A673 (cell line): ENCODE measurements at regions of chr4 and their contacts with region 1.

Region 1: DNA sequence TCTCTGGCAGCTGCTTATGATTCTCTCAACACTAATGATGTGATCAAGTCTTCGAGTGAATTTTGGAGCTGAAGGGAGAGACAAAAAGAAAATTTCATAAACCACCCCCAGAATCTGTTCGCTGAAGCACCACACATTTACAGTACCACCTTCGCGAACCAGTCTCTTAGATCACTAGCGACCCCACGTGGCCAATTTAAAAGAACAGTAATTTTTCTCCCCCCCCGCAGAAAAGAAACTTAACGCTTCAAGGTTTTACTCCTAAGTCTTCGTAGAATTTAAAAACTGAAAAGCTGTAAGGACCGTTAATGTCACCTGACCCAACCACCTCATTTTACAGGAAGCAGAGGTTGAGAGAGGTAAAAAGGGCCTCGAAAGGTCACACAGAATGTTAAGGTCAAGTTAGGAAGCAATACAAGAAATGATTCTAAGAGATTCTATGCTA is 187.5 kb downstream of the QDPR start:
- DNase-seq: peak; percentile 82
- H3K4me3 ChIP-seq: no peak overlapping the region
- H3K27ac ChIP-seq: peak overlapping the region; percentile 53
- H3K4me1 ChIP-seq: peaks cover 21% of the 10 kb centered on the region
- H3K27me3 ChIP-seq: no peaks in the 10 kb centered on the region
- CTCF ChIP-seq: peak; percentile 83

Region 2: GRCh38 chr4:16056681-16057385 is 1267.6 kb before region 1 on chr4:
- CTCF ChIA-PET with region 1: no interaction called
- POLR2A ChIA-PET with region 1: no interaction called
- intact Hi-C with region 1: no loop called
- DNase-seq: peak; percentile 55
- H3K4me3 ChIP-seq: no peak overlapping the region
- H3K27ac ChIP-seq: no peak overlapping the region
- H3K4me1 ChIP-seq: peaks cover 13% of the 10 kb centered on the region
- H3K27me3 ChIP-seq: no peaks in the 10 kb centered on the region
- CTCF ChIP-seq: no peak

Region 3: DNA sequence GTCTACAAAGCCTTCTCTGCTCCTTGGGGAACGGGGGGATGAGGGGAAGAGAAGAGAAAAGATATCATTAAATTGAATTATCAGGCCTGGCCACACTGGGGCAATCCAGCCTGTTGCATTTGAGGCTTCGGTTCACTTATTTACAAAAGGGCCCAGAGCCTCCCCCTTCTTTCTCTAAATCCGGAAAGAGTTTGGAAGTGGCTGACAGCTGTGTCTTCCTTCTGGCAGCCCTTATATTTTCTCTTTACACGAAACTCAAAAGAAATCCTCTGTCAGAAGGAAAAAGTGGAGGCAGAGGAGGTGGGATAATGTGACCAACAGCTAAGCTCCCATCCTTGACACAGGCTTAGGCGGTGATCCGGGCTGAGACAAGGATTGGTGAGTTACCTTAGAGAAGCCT is 939.8 kb before region 1 on chr4:
- CTCF ChIA-PET with region 1: no interaction called
- POLR2A ChIA-PET with region 1: no interaction called
- intact Hi-C with region 1: loop called (anchors 5 kb)
- DNase-seq: peak; percentile 84
- H3K4me3 ChIP-seq: no peak overlapping the region
- H3K27ac ChIP-seq: peak overlapping the region; percentile 92
- H3K4me1 ChIP-seq: peaks cover 54% of the 10 kb centered on the region
- H3K27me3 ChIP-seq: no peaks in the 10 kb centered on the region
- CTCF ChIP-seq: no peak

Region 4: GRCh38 chr4:16516796-16517439 is 807.5 kb before region 1 on chr4:
- CTCF ChIA-PET with region 1: no interaction called
- POLR2A ChIA-PET with region 1: no interaction called
- intact Hi-C with region 1: loop called (anchors 2 kb)
- DNase-seq: peak; percentile 91
- H3K4me3 ChIP-seq: no peak overlapping the region
- H3K27ac ChIP-seq: no peak overlapping the region
- H3K4me1 ChIP-seq: peaks cover 36% of the 10 kb centered on the region
- H3K27me3 ChIP-seq: no peaks in the 10 kb centered on the region
- CTCF ChIP-seq: peak; percentile 80

Region 5: DNA sequence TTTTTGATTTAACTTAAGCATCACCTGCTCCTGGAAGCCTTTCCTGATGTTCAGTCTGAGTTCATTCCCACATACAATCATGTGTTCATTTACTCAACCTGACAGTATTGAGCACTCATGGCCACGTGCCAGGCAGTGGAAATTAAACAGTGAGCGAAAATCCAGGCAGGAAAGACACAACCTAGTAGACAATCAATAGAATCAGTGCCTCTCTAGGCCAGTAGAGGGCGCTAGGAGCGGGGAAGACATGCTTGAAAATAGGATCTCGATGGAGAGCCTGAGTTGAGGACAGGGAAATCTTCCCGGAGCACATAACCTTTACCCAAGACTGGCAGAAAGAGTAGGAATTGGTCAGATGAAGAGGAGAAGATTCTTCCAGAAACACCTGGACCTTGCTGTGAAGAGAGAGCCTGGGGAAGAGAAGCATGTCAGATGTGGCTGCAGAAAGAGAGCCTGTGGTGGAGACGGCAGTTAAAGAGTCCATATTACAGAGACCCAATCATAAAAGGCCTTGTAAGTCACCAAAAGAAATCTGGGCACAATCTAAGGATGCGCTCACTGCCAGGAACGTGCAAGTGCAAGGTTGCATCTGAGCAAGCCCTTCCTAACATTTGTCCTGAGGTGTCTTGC is 529.5 kb before region 1 on chr4:
- CTCF ChIA-PET with region 1: interaction called, 3 read pairs
- POLR2A ChIA-PET with region 1: no interaction called
- intact Hi-C with region 1: loop called (anchors 1 kb)
- DNase-seq: peak; percentile 89
- H3K4me3 ChIP-seq: no peak overlapping the region
- H3K27ac ChIP-seq: no peak overlapping the region
- H3K4me1 ChIP-seq: peaks cover 6% of the 10 kb centered on the region
- H3K27me3 ChIP-seq: no peaks in the 10 kb centered on the region
- CTCF ChIP-seq: peak; percentile 98

Region 6: GRCh38 chr4:17092736-17093437 is 231.5 kb before region 1 on chr4:
- CTCF ChIA-PET with region 1: no interaction called
- POLR2A ChIA-PET with region 1: no interaction called
- intact Hi-C with region 1: loop called (anchors 1 kb)
- DNase-seq: peak; percentile 24
- H3K4me3 ChIP-seq: no peak overlapping the region
- H3K27ac ChIP-seq: peak overlapping the region; percentile 97
- H3K4me1 ChIP-seq: peaks cover 60% of the 10 kb centered on the region
- H3K27me3 ChIP-seq: no peaks in the 10 kb centered on the region
- CTCF ChIP-seq: no peak